Thyroid gland (tissue), 4 donors: ENCODE measurements at regions of chr5 and their contacts with region 1.

Region 1: GRCh38 chr5:96997265-96997859 is 61.5 kb downstream of the LNPEP start:
- DNase-seq: peak; percentile 30 to 44
- H3K4me3 ChIP-seq: no peak overlapping the region
- H3K27ac ChIP-seq: no peak overlapping the region
- H3K4me1 ChIP-seq: no peaks in the 10 kb centered on the region
- H3K27me3 ChIP-seq: no peaks in the 10 kb centered on the region
- CTCF ChIP-seq: peak; percentile 23 to 78 (median 49)
- POLR2A ChIP-seq: no peak

Region 2: DNA sequence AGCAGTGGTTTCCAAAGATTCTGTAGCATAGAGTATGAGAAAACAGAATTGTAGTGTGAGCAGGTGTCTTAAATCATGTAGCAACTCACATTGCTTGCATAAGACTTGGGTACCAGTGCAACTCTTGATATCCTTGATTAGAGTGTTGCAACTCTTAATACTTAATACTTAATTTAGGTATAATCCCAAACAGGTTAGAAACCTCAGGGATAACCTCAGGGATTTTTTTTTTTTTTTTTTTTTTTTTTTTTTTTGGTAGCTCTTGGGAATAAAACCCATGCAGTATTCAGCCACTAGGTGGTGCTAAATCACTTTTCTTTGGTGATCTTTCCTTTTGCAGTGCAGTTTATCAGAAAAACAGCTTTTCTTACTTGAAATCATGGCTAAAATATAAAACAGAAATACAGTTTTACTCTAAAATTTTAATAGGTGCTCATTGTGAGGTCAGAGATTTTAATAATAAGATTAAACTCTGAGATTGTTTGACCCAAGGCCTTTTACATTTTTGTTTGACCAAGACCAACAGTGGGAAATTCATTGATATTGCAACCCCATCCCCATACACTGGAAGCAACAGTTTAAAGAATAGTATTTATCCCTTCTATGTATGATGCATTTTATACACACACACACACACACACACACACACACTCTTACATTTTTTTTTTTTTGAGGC is 244.9 kb before region 1 on chr5:
- intact Hi-C with region 1: loop called (anchors 10 kb)
- DNase-seq: no peak
- H3K4me3 ChIP-seq: no peak overlapping the region
- H3K27ac ChIP-seq: no peak overlapping the region
- H3K4me1 ChIP-seq: no peaks in the 10 kb centered on the region
- H3K27me3 ChIP-seq: no peaks in the 10 kb centered on the region
- CTCF ChIP-seq: peak in 5 of 6 experiments; percentile 11 to 83 (median 44)
- POLR2A ChIP-seq: no peak

Region 3: GRCh38 chr5:97142521-97143254 is 145.3 kb after region 1 on chr5 and contains the start of gene LIX1:
- intact Hi-C with region 1: loop called (anchors 5 kb)
- DNase-seq: peak; percentile 51 to 58
- H3K4me3 ChIP-seq: no peak within 1 kb of the TSS
- H3K27ac ChIP-seq: no peak within 1 kb of the TSS
- H3K4me1 ChIP-seq: no peaks in the 10 kb centered on the region
- H3K27me3 ChIP-seq: no peaks in the 10 kb centered on the region
- CTCF ChIP-seq: peak in 5 of 6 experiments; percentile 22 to 76 (median 60)
- POLR2A ChIP-seq: no peak
- total RNA-seq, gene LIX1: 0.89 to 5.5 (median 1.7) TPM

Region 4: DNA sequence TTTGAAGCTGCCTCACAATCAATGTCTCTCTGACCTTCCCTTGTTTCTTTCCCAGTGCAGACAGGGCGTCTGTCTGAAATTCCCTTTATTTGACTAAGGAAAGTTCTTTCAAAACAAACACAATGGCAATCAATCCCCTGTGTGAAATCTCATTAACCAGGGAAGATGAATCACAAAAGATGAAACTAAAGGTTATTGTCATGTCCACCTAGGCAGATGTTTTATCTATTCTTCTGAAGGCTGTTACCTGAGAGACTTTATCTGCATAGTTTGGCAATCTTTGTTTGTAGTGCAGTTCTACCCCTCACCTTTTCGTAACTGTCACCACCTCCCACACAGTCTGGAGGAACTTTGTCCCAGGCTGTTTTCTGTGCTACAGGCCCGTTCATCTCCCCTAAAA is 403.2 kb after region 1 on chr5:
- intact Hi-C with region 1: no loop called
- DNase-seq: no peak
- H3K4me3 ChIP-seq: no peak overlapping the region
- H3K27ac ChIP-seq: no peak overlapping the region
- H3K4me1 ChIP-seq: no peaks in the 10 kb centered on the region
- H3K27me3 ChIP-seq: no peaks in the 10 kb centered on the region
- CTCF ChIP-seq: no peak
- POLR2A ChIP-seq: no peak

Region 5: GRCh38 chr5:97501965-97502305 is 504.6 kb after region 1 on chr5:
- intact Hi-C with region 1: no loop called
- DNase-seq: no peak
- H3K4me3 ChIP-seq: no peak overlapping the region
- H3K27ac ChIP-seq: no peak overlapping the region
- H3K4me1 ChIP-seq: no peaks in the 10 kb centered on the region
- H3K27me3 ChIP-seq: no peaks in the 10 kb centered on the region
- CTCF ChIP-seq: no peak
- POLR2A ChIP-seq: no peak